Tibial artery (tissue), 4 donors: ENCODE measurements at regions of chr5 and their contacts with region 1.

Region 1: GRCh38 chr5:77645158-77645994 is 6.9 kb upstream of the OTP start:
- DNase-seq: no peak
- H3K4me3 ChIP-seq: peak overlapping the region in 1 of 2 donors; percentile 30
- H3K27ac ChIP-seq: no peak overlapping the region
- H3K4me1 ChIP-seq: peaks cover 0 to 29% (median 15%) of the 10 kb centered on the region in 4 donors
- H3K27me3 ChIP-seq: peaks cover 20 to 69% of the 10 kb centered on the region in 2 donors
- CTCF ChIP-seq: peak; percentile 20 to 49

Region 2: DNA sequence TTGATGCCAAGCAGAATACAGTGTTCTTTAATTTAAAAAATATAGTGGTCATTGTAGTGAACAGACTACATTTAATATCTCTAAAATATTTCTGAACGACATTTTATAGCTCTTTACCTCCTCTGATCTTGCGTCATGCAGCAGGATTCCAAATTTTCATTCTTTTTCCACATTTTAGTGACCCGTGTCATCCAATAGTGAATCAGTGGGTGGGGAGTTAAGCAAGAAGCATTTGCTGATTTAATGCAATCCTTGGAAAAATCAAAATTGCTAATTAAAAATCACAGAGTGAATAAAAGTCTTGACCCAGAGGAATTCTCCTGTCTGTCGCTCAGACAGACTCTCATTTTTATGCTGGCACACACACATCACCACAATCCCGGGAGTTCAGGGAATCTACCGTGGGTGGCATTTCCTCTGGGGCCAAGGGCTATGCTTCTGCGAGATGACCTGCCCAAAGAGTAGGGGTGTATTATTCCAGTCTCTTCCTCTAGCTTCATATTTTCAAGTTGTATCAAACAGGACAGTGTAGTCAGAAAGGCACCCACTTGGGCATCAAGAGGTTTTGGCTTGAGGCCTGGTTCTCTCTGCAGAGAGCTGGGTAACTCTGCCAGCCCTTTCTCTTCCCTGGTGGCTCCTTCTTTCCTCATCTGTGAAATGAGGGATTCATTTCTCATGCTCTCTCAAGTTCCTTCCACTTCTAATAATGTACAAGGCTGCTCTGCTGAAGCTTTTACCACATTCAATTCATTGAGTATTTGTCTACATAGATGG is 17.9 kb after region 1 on chr5:
- intact Hi-C with region 1: no loop called
- DNase-seq: no peak
- H3K4me3 ChIP-seq: no peak overlapping the region
- H3K27ac ChIP-seq: no peak overlapping the region
- H3K4me1 ChIP-seq: no peaks in the 10 kb centered on the region
- H3K27me3 ChIP-seq: peaks cover 0 to 14% of the 10 kb centered on the region in 2 donors
- CTCF ChIP-seq: no peak

Region 3: GRCh38 chr5:77696120-77696519 is 50.7 kb after region 1 on chr5:
- intact Hi-C with region 1: no loop called
- DNase-seq: no peak
- H3K4me3 ChIP-seq: no peak overlapping the region
- H3K27ac ChIP-seq: no peak overlapping the region
- H3K4me1 ChIP-seq: peaks cover 0 to 19% (median 0%) of the 10 kb centered on the region in 4 donors
- H3K27me3 ChIP-seq: no peaks in the 10 kb centered on the region
- CTCF ChIP-seq: no peak

Region 4: GRCh38 chr5:77785229-77785628 is 139.9 kb after region 1 on chr5:
- intact Hi-C with region 1: loop called (anchors 10 kb)
- DNase-seq: no peak
- H3K4me3 ChIP-seq: no peak overlapping the region
- H3K27ac ChIP-seq: no peak overlapping the region
- H3K4me1 ChIP-seq: no peaks in the 10 kb centered on the region
- H3K27me3 ChIP-seq: no peaks in the 10 kb centered on the region
- CTCF ChIP-seq: no peak

Region 5: GRCh38 chr5:78416677-78417425 is 771.5 kb after region 1 on chr5:
- intact Hi-C with region 1: no loop called
- DNase-seq: no peak
- H3K4me3 ChIP-seq: no peak overlapping the region
- H3K27ac ChIP-seq: no peak overlapping the region
- H3K4me1 ChIP-seq: no peaks in the 10 kb centered on the region
- H3K27me3 ChIP-seq: no peaks in the 10 kb centered on the region
- CTCF ChIP-seq: no peak